Vagina (tissue), 2 donors: ENCODE measurements at regions of chr10 and their contacts with region 1.

Region 1: DNA sequence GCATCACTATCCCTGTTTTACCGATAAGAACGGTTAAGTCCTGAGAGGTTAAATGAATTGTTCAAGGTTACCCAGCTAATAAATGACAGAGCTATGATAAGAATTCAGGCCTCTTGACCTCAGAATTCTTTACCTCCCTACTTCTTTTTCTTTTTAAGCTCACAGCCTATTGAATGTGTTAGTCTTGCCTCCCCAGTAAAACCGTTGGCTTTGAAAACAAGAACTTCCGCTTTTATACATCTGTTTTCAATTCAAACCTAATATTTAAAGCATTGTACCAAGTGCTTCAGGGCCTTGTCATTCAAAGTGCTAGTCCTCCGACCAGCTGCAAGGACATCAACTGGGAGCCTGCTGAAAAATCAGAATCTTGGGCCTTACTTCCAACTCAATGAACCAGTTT is 15.6 kb downstream of the SEC31B start:
- DNase-seq: no peak
- H3K4me3 ChIP-seq: no peak overlapping the region
- H3K27ac ChIP-seq: no peak overlapping the region
- H3K4me1 ChIP-seq: no peaks in the 10 kb centered on the region
- H3K27me3 ChIP-seq: no peaks in the 10 kb centered on the region
- CTCF ChIP-seq: no peak
- POLR2A ChIP-seq: no peak

Region 2: DNA sequence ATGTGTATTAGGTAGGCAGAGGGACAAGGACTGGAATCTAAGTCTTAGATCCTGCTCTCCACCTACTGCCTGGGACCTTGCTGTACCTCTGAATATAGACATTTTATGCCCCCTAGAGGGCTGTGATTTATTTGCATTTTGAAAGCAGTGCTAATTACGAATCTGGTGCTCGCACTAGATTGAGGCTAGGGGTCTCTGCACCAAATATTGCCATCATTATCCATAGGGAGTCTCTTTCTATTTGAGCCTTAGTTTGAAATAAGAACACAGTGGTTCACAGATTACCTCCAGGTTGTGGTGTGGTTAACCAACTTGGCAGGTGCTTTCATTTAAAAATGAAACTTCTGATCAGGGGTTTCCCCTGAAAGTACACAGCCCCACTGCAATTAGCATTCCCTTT is 1133.1 kb before region 1 on chr10:
- intact Hi-C with region 1: no loop called
- DNase-seq: no peak
- H3K4me3 ChIP-seq: no peak overlapping the region
- H3K27ac ChIP-seq: no peak overlapping the region
- H3K4me1 ChIP-seq: no peaks in the 10 kb centered on the region
- H3K27me3 ChIP-seq: no peaks in the 10 kb centered on the region
- CTCF ChIP-seq: no peak
- POLR2A ChIP-seq: no peak

Region 3: GRCh38 chr10:100174699-100175677 is 329.1 kb before region 1 on chr10:
- intact Hi-C with region 1: loop called (anchors 5 kb)
- DNase-seq: no peak
- H3K4me3 ChIP-seq: no peak overlapping the region
- H3K27ac ChIP-seq: no peak overlapping the region
- H3K4me1 ChIP-seq: no peaks in the 10 kb centered on the region
- H3K27me3 ChIP-seq: no peaks in the 10 kb centered on the region
- CTCF ChIP-seq: no peak
- POLR2A ChIP-seq: no peak